AG04450 (cell line): ENCODE measurements at regions of chr19 and their contacts with region 1.

Region 1: DNA sequence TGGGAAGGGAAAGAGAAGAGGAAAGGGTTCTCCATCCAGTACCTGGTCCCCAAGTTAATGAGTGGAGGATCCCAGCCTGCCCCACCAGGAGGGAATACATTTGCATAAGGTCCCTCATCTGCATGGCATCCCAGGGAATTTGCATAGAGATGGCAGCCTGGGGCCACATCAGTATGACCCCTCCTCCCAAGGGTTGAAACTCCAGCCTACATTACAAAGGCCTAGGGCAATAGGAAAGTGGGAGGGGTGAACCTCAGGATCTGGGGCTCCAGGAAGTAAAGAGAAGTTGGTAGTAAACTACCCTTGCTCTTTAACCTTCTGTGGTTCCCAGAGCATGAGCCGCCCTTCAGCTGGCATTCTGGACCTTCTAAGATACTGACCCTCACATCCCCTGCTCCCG is 6.8 kb upstream of the NECTIN2 start:
- DNase-seq: no peak
- H3K4me3 ChIP-seq: no peak overlapping the region
- H3K27ac ChIP-seq: no peak overlapping the region
- H3K27me3 ChIP-seq: peaks cover 2% of the 10 kb centered on the region
- CTCF ChIP-seq: no peak

Region 2: DNA sequence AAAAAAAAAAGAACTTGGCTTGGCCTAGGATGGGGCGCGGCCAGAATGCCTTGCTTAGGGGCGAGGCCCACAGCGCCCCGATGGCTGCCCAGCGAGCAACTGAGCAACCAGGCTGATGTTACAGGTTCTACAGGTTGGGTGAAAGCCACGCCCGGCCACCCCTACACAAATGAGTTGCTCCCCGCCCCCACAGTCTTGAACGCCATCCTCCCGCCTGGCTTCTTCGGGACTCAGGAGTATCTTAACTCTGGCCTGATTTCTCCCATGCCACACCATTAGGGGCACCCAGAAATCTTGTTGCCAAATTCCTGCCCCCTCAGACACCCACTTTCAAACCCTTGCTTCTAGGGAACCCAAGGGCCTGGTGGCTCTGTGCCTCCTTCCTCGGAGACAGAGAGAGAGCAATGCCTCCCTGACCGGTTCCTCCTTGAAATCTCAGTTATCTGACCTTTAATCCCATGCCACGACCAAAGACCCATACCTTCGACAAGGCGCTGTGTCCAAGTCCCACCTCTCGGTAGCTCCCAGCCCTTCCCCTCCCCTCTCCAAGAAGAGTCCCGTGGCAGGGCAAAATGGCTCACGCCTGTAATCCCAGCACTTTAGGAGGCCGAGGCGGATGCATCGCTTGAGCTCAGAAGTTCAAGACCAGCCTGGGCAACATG is 62.7 kb before region 1 on chr19:
- CTCF ChIA-PET with region 1: interaction called, 39 read pairs
- POLR2A ChIA-PET with region 1: interaction called, 13 read pairs
- DNase-seq: no peak
- H3K4me3 ChIP-seq: no peak overlapping the region
- H3K27ac ChIP-seq: no peak overlapping the region
- H3K27me3 ChIP-seq: no peaks in the 10 kb centered on the region
- CTCF ChIP-seq: no peak

Region 3: DNA sequence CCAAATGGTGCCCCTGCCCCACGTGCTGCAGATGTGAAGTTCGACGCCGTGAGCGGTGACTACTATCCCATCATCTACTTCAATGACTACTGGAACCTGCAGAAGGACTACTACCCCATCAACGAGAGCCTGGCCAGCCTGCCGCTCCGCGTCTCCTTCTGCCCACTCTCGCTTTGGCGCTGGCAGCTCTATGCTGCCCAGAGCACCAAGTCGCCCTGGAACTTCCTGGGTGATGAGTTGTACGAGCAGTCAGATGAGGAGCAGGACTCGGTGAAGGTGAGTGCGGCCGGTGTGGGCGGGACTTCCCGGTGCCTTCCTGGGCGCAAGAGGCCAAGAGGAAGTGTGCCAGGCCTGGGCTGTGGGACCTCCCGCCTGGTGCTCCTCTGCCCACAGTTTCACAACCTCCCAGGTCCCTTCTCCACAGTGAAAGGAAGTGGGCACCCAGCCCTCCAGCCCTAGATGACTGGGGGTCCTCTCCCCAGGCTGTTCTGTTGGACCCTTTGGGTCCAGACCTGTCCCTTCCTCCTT is 147.9 kb after region 1 on chr19:
- CTCF ChIA-PET with region 1: no interaction called
- POLR2A ChIA-PET with region 1: no interaction called
- DNase-seq: no peak
- H3K4me3 ChIP-seq: no peak overlapping the region
- H3K27ac ChIP-seq: no peak overlapping the region
- H3K27me3 ChIP-seq: no peaks in the 10 kb centered on the region
- CTCF ChIP-seq: no peak